ENCODE measurements at regions of chr14 and their contacts with region 1.

Region 1: GRCh38 chr14:99729991-99730868 is 46.1 kb downstream of the CYP46A1 start:
- DNase-seq: peak; percentile 80 to 94
- ATAC-seq: peak; percentile 76
- H3K4me3 ChIP-seq: peak overlapping the region; percentile 27 to 41
- H3K27ac ChIP-seq: no peak overlapping the region
- H3K4me1 ChIP-seq: no peaks in the 10 kb centered on the region
- H3K27me3 ChIP-seq: no peaks in the 10 kb centered on the region

Region 2: GRCh38 chr14:99654235-99654966 is 75.8 kb before region 1 on chr14:
- intact Hi-C with region 1: no loop called
- DNase-seq: peak in 1 of 2 donors; percentile 77
- ATAC-seq: peak; percentile 72
- H3K4me3 ChIP-seq: no peak overlapping the region
- H3K27ac ChIP-seq: no peak overlapping the region
- H3K4me1 ChIP-seq: no peaks in the 10 kb centered on the region
- H3K27me3 ChIP-seq: no peaks in the 10 kb centered on the region

Region 3: GRCh38 chr14:99672506-99673304 is 57.5 kb before region 1 on chr14:
- intact Hi-C with region 1: no loop called
- DNase-seq: peak; percentile 53 to 64
- ATAC-seq: no peak
- H3K4me3 ChIP-seq: no peak overlapping the region
- H3K27ac ChIP-seq: no peak overlapping the region
- H3K4me1 ChIP-seq: no peaks in the 10 kb centered on the region
- H3K27me3 ChIP-seq: no peaks in the 10 kb centered on the region

Region 4: DNA sequence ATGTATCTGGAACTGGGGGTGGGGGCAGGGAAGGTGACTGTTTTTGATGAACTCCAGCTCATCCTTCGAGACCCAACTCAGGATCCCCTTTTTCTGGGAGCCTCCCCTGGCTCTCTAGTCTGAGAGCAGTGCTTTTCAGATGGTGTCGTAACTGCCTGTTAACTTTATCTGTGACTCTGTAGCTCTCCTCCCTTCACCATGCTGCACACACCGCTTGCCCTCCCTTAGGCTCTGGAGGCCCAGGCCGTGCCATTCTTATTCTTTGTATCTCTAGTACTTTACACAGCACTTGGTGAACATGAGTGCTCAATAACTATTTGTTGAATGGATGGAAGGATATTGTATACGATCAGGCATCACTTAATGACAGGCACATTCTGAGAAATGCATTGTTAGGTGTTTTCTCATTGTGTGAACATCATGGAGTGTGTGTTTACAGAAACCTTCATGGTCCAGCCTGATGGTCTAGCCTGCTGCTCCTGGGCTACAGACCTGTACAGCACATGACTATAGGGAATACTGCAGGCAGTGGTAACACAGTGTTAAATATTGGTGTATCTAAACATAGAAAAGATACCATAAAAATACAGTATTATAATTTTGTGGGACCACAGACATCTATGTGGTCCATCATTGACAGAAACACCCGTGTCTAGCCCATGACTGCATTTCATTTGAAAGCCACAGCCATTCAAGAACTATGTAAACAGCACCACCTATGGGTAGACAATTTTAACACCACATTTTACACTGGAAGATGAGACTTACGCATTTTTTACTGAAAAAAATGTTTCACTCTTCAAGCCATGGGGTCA is 154.8 kb after region 1 on chr14:
- intact Hi-C with region 1: loop called (anchors 1 to 2 kb)
- DNase-seq: no peak
- ATAC-seq: peak; percentile 82
- H3K4me3 ChIP-seq: no peak overlapping the region
- H3K27ac ChIP-seq: no peak overlapping the region
- H3K4me1 ChIP-seq: no peaks in the 10 kb centered on the region
- H3K27me3 ChIP-seq: no peaks in the 10 kb centered on the region

Region 5: DNA sequence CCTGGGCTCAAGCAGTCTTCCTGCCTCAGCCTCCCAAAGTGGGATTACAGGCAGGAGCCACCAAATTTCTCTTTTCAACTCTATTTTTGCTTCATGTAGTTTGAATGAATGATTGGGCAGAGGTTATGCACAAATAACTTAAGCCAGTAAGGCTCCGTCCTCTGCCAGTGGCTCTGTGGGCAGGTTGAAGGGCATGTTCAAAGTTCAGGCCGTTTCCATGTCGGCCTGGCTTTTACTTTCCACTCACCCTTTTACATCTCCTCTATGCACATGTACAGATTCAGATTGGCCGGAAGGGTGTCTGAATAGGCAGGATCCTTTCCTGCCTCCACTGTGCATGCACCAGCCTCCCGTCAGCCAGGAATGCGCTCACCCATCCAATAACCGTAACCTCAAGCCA is 195.2 kb after region 1 on chr14:
- intact Hi-C with region 1: no loop called
- DNase-seq: no peak
- ATAC-seq: no peak
- H3K4me3 ChIP-seq: no peak overlapping the region
- H3K27ac ChIP-seq: no peak overlapping the region
- H3K4me1 ChIP-seq: no peaks in the 10 kb centered on the region
- H3K27me3 ChIP-seq: no peaks in the 10 kb centered on the region

Measured in aorta (tissue), 5 donors.